Right ventricle myocardium inferior (tissue), 1 donor: ENCODE measurements at regions of chr14 and their contacts with region 1.

Region 1: DNA sequence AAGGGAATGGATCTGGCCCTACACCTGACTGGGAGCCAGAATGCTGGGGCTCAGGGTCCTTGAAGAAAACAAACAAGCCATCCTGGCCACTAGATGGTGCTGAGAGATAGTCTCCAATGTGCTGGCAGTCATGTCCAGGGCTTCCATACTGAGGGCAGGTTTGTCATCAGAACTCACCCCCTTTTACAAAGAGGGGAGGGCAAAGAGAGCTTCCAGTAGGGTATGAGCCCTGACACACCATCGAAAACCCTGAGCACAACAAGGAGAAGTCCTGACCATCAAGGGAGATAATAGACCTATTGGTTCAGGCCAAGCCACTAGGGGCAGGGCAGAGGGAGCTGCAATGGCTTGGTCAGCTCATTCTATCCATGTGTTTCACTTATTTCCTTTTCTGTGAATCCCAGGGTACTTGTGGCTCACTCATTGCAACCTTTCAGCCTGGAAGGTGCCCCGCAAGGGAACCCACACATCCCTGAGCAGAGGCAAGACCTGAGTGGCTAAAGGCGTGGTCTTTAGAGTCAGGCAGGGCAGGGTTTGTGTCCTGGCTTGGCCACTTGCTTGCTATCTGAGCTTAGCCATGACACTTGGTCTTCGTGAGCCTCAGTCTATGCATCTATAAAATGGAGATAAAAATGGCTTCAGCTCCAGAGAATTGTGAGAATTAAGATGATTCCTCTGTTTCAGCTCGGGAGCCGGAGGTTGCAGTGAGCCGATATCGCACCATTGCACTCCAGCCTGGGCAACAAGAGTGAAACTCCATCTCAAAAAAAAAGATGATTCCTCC is 6.2 kb upstream of the PLEKHH1 start:
- DNase-seq: no peak
- ATAC-seq: peak; percentile 61

Region 2: DNA sequence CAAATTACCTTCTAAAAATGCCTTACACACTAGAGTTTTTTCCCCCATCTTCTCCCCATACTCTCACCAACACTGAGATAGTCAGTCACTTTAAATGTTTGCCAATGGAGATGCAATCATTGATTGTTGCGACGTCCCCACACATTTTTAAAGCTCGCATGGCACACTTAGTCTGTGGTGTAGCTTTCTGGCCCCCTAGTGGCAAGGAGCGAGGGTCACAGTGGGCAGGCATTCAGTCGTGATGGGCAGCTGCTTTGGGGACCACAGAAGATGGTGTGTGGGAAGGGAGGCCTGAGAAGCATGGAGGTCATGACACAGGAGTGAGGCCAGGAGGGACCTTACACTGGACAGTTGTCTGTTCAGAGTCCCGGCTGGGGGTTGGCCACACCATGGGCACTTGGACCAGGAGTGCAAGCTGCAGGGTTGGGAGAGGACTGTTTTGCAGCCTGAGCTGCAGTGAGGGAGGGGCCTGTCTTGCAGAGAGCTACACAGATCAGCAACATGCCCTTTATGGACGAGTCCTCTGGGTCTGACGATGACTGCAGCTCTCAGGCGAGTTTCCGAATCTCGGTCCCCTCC is 44.5 kb after region 1 on chr14:
- intact Hi-C with region 1: loop called (anchors 5 kb)
- DNase-seq: no peak
- ATAC-seq: peak; percentile 68

Region 3: DNA sequence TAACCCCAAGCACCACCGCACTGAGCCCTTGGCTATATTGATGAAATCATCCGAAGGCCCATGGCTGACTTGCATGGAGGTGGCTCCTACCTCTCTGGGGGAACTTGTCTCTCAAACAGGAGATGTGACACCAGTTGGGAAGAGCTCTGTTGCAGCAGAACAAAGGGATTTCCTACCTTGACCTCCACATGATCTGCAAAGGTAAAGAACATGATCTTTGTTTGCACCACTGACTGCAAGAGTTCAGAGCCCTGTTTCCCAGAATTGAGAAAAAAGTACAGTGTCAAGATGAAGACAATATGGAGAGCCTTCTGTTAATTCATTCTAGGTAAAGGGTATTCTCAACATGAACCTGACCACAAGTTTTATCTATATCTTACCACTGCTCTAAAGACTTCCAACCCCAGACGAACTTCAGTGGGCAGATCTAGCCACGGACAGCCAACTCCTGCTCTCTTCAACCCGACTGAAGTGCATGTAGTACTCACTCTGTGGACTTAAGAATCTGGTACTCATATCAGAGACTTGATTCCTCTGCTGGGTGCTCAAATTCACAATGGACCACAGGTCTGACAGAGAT is 257.5 kb after region 1 on chr14:
- intact Hi-C with region 1: no loop called
- DNase-seq: no peak
- ATAC-seq: no peak